CD14-positive monocyte (primary cell): ENCODE measurements at regions of chr12 and their contacts with region 1.

Region 1: GRCh38 chr12:8081251-8081920 is 688 bp upstream of the NECAP1 start:
- DNase-seq: no peak
- H3K4me3 ChIP-seq: peak overlapping the region; percentile 99
- H3K4me3 Mint-ChIP-seq: peak overlapping the region; percentile 99 to 100
- H3K27ac ChIP-seq: peak overlapping the region; percentile 96 to 97
- H3K27ac Mint-ChIP-seq: peak overlapping the region; percentile 98 to 100 (median 99)
- H3K4me1 ChIP-seq: peaks cover 48 to 64% of the 10 kb centered on the region in 2 donors
- H3K4me1 Mint-ChIP-seq: peaks cover 66% of the 10 kb centered on the region
- H3K27me3 ChIP-seq: no peaks in the 10 kb centered on the region
- H3K27me3 Mint-ChIP-seq: no peaks in the 10 kb centered on the region
- CTCF ChIP-seq: no peak

Region 2: DNA sequence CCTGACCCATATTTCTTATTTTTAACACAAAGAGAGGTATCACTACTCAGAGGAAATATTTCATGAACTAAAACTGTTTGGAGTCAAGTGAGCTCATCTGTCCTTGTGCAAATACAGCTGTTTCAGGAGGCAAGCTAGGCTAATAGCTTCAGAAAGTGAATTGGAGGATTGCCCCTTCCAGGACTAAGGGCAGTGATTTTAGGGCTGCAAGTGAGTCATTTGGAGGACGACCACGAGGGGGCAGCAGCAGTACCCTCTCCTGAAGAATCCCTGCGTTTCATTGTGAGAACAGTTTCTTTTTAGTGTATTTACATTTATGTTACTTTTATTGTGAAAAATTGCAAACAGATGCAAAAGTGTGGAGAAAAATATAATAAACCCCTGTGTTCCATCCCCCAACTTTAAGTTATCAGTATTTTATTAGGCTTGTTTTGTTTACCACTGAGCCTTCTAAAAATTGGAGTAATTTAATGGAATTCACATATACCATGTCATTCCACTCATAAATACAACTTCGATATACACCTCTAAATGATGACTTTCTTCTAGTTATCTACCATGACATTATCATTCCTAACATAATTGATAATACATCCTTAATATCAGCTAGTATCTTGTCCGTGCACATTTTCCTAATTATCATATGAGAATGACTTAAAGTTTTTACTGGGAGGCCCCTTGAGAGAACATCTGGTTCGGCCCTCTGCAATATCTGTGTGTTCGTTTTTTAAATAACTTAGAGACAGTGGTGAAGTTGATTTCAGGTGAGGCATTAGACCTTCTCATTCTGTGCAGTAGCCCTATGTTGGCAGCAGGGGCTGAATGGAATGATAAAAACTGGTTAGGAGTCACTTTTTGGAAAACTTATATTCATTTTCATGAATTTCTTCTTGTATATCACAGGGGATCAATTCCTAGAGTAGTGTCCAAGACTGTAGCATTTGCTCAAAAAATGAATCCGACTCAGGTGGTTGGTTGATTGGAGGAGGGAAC is 35.1 kb before region 1 on chr12:
- intact Hi-C with region 1: loop called (anchors 5 kb)
- DNase-seq: peak; percentile 70 to 82 (median 80)
- H3K4me3 ChIP-seq: no peak overlapping the region
- H3K4me3 Mint-ChIP-seq: no peak overlapping the region
- H3K27ac ChIP-seq: peak overlapping the region in 1 of 2 donors; percentile 8
- H3K27ac Mint-ChIP-seq: peak overlapping the region in 3 of 7 donors; percentile 35 to 58 (median 44)
- H3K4me1 ChIP-seq: peaks cover 19 to 34% of the 10 kb centered on the region in 2 donors
- H3K4me1 Mint-ChIP-seq: peaks cover 26% of the 10 kb centered on the region
- H3K27me3 ChIP-seq: no peaks in the 10 kb centered on the region
- H3K27me3 Mint-ChIP-seq: peaks cover 0 to 1% (median 0%) of the 10 kb centered on the region in 3 donors
- CTCF ChIP-seq: peak; percentile 84

Region 3: GRCh38 chr12:8127138-8127537 is 45.8 kb after region 1 on chr12:
- intact Hi-C with region 1: no loop called
- DNase-seq: peak; percentile 43 to 63 (median 54)
- H3K4me3 ChIP-seq: peak overlapping the region in 1 of 3 experiments; percentile 92
- H3K4me3 Mint-ChIP-seq: peak overlapping the region in 1 of 2 donors; percentile 68
- H3K27ac ChIP-seq: peak overlapping the region in 1 of 2 donors; percentile 61
- H3K27ac Mint-ChIP-seq: peak overlapping the region; percentile 72 to 85 (median 77)
- H3K4me1 ChIP-seq: peaks cover 41 to 53% of the 10 kb centered on the region in 2 donors
- H3K4me1 Mint-ChIP-seq: peaks cover 61% of the 10 kb centered on the region
- H3K27me3 ChIP-seq: no peaks in the 10 kb centered on the region
- H3K27me3 Mint-ChIP-seq: peaks cover 0 to 2% (median 0%) of the 10 kb centered on the region in 3 donors
- CTCF ChIP-seq: no peak